ENCODE measurements at regions of chr2 and their contacts with region 1.

Region 1: GRCh38 chr2:216412022-216412999 is at the start of gene SMARCAL1:
- DNase-seq: peak; percentile 97
- H3K27ac ChIP-seq: peak within 1 kb of the TSS; percentile 87
- CTCF ChIP-seq: no peak

Region 2: GRCh38 chr2:216505133-216506106 is 93.1 kb after region 1 on chr2:
- CTCF ChIA-PET with region 1: no interaction called
- POLR2A ChIA-PET with region 1: interaction called, 21 read pairs
- DNase-seq: no peak
- H3K27ac ChIP-seq: 0 out of 2 replicates have a peak overlapping the region, but pooled peaks have one; percentile 35
- CTCF ChIP-seq: no peak

Region 3: DNA sequence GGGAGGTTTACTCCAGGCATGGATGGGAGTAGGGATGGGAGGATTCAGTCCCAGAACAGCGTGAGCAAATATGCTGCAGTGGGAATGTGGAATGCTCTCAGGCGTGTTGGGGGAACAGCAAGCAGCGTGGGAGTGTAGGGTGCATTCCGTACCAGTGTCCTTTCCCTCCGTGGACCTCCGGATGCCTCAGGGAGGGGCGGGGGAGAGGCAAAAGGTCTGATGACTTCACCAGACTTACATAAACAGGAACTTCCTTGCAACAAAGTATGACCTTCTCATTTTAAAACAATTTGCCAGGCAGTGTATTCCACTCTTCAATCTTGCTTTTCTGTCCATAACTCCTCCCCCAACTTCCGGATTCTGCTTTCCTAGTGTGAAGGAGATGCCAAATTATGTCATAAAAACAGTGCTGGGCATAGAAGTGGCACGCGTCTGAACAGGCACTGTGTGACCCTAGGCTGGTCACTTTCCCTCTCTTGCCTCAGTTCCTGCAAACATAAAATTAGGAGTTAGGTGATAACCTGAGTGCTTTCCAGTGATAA is 123.2 kb after region 1 on chr2:
- CTCF ChIA-PET with region 1: no interaction called
- POLR2A ChIA-PET with region 1: no interaction called
- DNase-seq: peak; percentile 46
- H3K27ac ChIP-seq: peak overlapping the region; percentile 93
- CTCF ChIP-seq: no peak

Region 4: GRCh38 chr2:217277646-217278398 is 865.5 kb after region 1 on chr2:
- CTCF ChIA-PET with region 1: no interaction called
- POLR2A ChIA-PET with region 1: no interaction called
- DNase-seq: peak; percentile 50
- H3K27ac ChIP-seq: no peak overlapping the region
- CTCF ChIP-seq: no peak

Measured in RWPE1 (cell line).